CD8-positive, alpha-beta T cell (primary cell): ENCODE measurements at regions of chr7 and their contacts with region 1.

Region 1: GRCh38 chr7:54159088-54159487 is 383.1 kb upstream of the VSTM2A start:
- DNase-seq: no peak
- ATAC-seq: no peak
- H3K4me3 ChIP-seq: no peak overlapping the region
- H3K4me3 Mint-ChIP-seq: no peak overlapping the region
- H3K27ac ChIP-seq: no peak overlapping the region
- H3K27ac Mint-ChIP-seq: no peak overlapping the region
- H3K4me1 ChIP-seq: no peaks in the 10 kb centered on the region
- H3K4me1 Mint-ChIP-seq: no peaks in the 10 kb centered on the region
- H3K27me3 ChIP-seq: no peaks in the 10 kb centered on the region
- H3K27me3 Mint-ChIP-seq: no peaks in the 10 kb centered on the region
- CTCF ChIP-seq: no peak

Region 2: GRCh38 chr7:54189330-54189729 is 30.2 kb after region 1 on chr7:
- CTCF ChIA-PET with region 1: no interaction called
- POLR2A ChIA-PET with region 1: no interaction called
- intact Hi-C with region 1: loop called in 1 of 2 experiments (anchors 5 kb)
- DNase-seq: no peak
- ATAC-seq: no peak
- H3K4me3 ChIP-seq: no peak overlapping the region
- H3K4me3 Mint-ChIP-seq: no peak overlapping the region
- H3K27ac ChIP-seq: no peak overlapping the region
- H3K27ac Mint-ChIP-seq: no peak overlapping the region
- H3K4me1 ChIP-seq: no peaks in the 10 kb centered on the region
- H3K4me1 Mint-ChIP-seq: no peaks in the 10 kb centered on the region
- H3K27me3 ChIP-seq: no peaks in the 10 kb centered on the region
- H3K27me3 Mint-ChIP-seq: no peaks in the 10 kb centered on the region
- CTCF ChIP-seq: no peak